Motor neuron (in vitro differentiated cells): ENCODE measurements at regions of chr6 and their contacts with region 1.

Region 1: DNA sequence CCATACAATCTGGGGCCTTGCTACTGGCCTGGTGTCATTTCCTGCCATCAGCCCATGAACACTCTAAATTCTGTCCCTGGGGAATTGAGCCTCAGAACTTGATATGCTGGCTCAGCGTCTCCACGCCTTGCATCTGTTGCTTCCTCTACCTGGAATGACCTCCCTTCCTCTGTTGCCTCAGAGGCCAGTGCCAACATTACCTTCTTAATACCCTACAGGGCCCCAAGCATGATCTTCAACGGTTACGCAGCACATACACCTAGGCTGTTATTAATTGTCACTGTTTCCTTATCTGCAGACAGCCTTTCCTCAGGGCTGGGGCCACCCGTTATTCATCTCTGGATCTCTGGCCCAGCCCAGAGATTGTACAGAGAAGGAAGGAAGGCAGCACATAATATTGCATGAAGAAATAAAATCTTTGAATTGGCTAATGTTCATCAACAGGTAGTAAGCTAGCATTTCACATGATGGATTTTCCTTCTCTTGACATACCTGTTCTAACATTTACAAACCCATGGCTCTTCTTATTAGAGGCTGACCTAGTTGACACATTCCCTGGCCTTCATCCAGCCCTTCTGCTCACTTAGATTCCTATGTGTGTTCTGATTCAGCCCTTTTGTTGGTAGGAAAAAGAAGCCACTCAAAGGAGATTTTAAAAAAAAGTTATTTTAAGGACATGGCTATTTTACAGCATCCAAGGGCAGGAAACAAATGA is 8.4 kb upstream of the RNF182 start:
- ATAC-seq: peak in 2 of 8 experiments; percentile 20 to 24
- H3K4me3 ChIP-seq: no peak overlapping the region
- H3K27ac ChIP-seq: no peak overlapping the region
- H3K4me1 ChIP-seq: no peaks in the 10 kb centered on the region

Region 2: GRCh38 chr6:14066782-14067406 is 150.5 kb after region 1 on chr6:
- in situ Hi-C with region 1: loop called in 5 of 9 experiments (anchors 10 to 25 kb)
- ATAC-seq: peak; percentile 39 to 89 (median 60)
- H3K4me3 ChIP-seq: no peak overlapping the region
- H3K27ac ChIP-seq: no peak overlapping the region
- H3K4me1 ChIP-seq: no peaks in the 10 kb centered on the region